Ovary (tissue), 10 donors: ENCODE measurements at regions of chr2 and their contacts with region 1.

Region 1: DNA sequence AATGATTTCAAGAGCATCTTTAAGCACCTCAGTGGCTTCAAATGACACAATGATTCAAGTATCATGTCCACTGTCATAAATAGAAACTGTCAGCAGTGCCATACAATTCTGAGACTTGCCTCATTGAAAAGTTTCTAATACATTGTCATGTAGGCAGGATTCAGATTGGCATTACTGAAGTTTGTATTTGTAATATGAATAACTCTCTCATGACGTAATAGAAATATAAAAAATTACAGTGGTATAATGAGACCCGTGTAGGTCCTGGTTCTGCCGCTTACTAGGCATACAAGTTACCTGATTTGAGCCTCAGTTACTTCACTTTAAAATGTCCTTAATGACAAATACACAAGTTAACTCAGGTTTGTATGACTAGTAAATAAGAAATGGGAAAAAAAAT is 1536.2 kb upstream of the NXPH2 start:
- DNase-seq: no peak
- H3K4me3 ChIP-seq: no peak overlapping the region
- H3K27ac ChIP-seq: no peak overlapping the region
- H3K4me1 ChIP-seq: no peaks in the 10 kb centered on the region
- H3K27me3 ChIP-seq: no peaks in the 10 kb centered on the region
- CTCF ChIP-seq: no peak
- EP300 ChIP-seq: no peak
- POLR2A ChIP-seq: no peak

Region 2: DNA sequence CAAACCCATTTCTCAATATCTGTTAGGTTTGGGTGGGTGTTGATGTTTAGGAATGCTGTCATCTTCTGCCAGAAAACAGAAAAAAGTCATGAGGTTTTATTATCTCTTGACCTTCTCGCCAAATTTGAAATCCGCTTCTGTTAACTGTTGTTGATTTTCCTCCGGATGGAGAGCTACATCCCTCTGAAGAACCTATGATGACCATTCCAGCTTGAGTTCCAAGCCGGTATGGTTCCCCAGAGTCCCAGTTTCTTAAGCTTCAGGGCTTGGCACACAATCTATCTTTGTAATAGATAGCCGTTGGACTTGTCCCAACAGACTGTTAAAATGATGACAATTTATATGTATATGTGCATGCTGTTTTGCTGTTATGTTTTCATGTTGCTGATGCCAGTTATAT is 613.5 kb after region 1 on chr2:
- intact Hi-C with region 1: loop called in 1 of 4 experiments (anchors 5 kb)
- DNase-seq: no peak
- H3K4me3 ChIP-seq: no peak overlapping the region
- H3K27ac ChIP-seq: no peak overlapping the region
- H3K4me1 ChIP-seq: no peaks in the 10 kb centered on the region
- H3K27me3 ChIP-seq: no peaks in the 10 kb centered on the region
- CTCF ChIP-seq: no peak
- EP300 ChIP-seq: no peak
- POLR2A ChIP-seq: no peak